Endothelial cell of umbilical vein (primary cell): ENCODE measurements at regions of chr7 and their contacts with region 1.

Region 1: GRCh38 chr7:111098011-111098925 is 7.3 kb downstream of the LRRN3 start:
- DNase-seq: peak; percentile 54
- H3K4me3 ChIP-seq: no peak overlapping the region
- H3K27ac ChIP-seq: no peak overlapping the region
- H3K4me1 ChIP-seq: no peaks in the 10 kb centered on the region
- H3K27me3 ChIP-seq: no peaks in the 10 kb centered on the region
- CTCF ChIP-seq: peak; percentile 40 to 59
- POLR2A ChIP-seq: no peak

Region 2: GRCh38 chr7:109844362-109844761 is 1253.9 kb before region 1 on chr7:
- CTCF ChIA-PET with region 1: interaction called, 5 read pairs
- POLR2A ChIA-PET with region 1: no interaction called
- dilution Hi-C with region 1: no loop called
- intact Hi-C with region 1: loop called (anchors 1 kb)
- DNase-seq: peak; percentile 29
- H3K4me3 ChIP-seq: no peak overlapping the region
- H3K27ac ChIP-seq: no peak overlapping the region
- H3K4me1 ChIP-seq: no peaks in the 10 kb centered on the region
- H3K27me3 ChIP-seq: no peaks in the 10 kb centered on the region
- CTCF ChIP-seq: peak; percentile 20 to 27
- POLR2A ChIP-seq: no peak

Region 3: GRCh38 chr7:110090110-110090769 is 1008.0 kb before region 1 on chr7:
- CTCF ChIA-PET with region 1: interaction called, 16 read pairs
- POLR2A ChIA-PET with region 1: no interaction called
- dilution Hi-C with region 1: no loop called
- intact Hi-C with region 1: loop called (anchors 1 kb)
- DNase-seq: peak; percentile 48
- H3K4me3 ChIP-seq: no peak overlapping the region
- H3K27ac ChIP-seq: no peak overlapping the region
- H3K4me1 ChIP-seq: no peaks in the 10 kb centered on the region
- H3K27me3 ChIP-seq: no peaks in the 10 kb centered on the region
- CTCF ChIP-seq: peak; percentile 40 to 58
- POLR2A ChIP-seq: no peak

Region 4: DNA sequence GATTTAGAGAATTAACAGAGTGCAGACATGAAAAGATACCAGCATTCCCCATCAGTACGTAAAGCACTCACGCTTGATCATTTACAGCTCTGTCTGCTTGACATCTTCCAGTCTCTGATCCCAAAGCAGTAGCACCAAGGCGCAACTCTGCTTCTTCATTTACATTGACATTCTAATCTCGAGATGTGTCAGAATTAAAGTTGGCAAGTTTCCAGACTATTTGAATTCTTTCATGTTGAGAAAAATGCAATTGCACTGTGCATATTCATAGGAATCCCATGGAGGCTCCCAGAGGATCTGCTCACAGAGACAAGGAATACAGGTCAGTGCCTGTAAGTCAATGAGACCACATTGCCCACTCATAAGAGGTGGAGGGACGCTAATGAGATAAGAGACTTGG is 176.6 kb after region 1 on chr7:
- CTCF ChIA-PET with region 1: no interaction called
- POLR2A ChIA-PET with region 1: no interaction called
- dilution Hi-C with region 1: no loop called
- intact Hi-C with region 1: no loop called
- DNase-seq: peak; percentile 4
- H3K4me3 ChIP-seq: no peak overlapping the region
- H3K27ac ChIP-seq: no peak overlapping the region
- H3K4me1 ChIP-seq: no peaks in the 10 kb centered on the region
- H3K27me3 ChIP-seq: no peaks in the 10 kb centered on the region
- CTCF ChIP-seq: no peak
- POLR2A ChIP-seq: no peak